ENCODE measurements at regions of chr1 and their contacts with region 1.

Region 1: GRCh38 chr1:201877877-201878401 is 10.8 kb upstream of the SHISA4 start:
- DNase-seq: no peak
- ATAC-seq: no peak
- H3K4me3 Mint-ChIP-seq: no peak overlapping the region
- H3K27ac Mint-ChIP-seq: no peak overlapping the region
- H3K4me1 Mint-ChIP-seq: peaks cover 11% of the 10 kb centered on the region
- H3K27me3 Mint-ChIP-seq: no peaks in the 10 kb centered on the region
- CTCF ChIP-seq: no peak

Region 2: GRCh38 chr1:201859424-201859823 is 18.5 kb before region 1 on chr1:
- CTCF ChIA-PET with region 1: no interaction called
- POLR2A ChIA-PET with region 1: no interaction called
- intact Hi-C with region 1: no loop called
- DNase-seq: no peak
- ATAC-seq: no peak
- H3K4me3 Mint-ChIP-seq: no peak overlapping the region
- H3K27ac Mint-ChIP-seq: no peak overlapping the region
- H3K4me1 Mint-ChIP-seq: no peaks in the 10 kb centered on the region
- H3K27me3 Mint-ChIP-seq: no peaks in the 10 kb centered on the region
- CTCF ChIP-seq: no peak

Region 3: DNA sequence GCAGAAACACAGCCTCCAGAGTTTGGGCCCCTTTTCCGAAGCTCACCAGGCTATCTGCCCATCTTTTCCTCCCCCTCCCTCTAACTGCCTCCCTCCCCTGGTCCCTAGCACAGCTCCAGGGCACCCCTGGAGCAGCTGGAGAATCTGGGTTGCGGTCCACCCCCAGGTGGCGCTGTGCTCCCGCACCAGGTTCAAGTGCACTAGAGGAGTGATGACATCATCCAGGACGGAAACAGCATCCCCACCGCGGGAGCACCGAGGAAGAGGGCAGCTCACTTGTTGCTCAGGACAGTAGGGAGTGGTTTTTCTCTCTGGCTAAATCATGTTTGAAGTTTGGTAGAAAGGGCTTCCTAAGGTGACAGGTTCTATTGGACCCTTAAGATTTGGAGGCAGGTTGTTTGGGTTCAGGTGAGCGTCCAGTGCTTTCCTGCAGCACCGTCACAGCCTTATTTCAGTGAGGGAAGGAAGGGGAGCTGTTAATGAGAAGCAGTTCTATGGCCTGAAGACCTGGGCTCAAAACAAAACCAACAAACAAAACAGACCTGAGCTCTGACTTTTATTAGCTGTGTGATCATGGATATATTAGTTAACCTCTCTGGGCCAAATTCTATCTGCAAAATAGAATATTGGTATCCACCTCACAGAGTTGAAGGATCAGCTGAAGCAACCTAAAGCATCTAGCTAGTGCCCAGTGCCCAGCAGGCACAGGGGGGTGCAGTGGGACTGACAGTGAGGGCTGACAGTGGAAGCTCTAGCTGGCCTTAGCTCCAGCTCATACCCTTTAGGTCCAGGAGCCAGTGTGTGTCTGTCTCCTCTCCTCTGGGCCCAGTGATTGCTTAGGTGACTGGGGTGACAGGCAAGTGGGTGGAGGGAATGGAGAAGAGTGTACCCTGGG is 18.2 kb after region 1 on chr1:
- CTCF ChIA-PET with region 1: interaction called, 20 read pairs
- POLR2A ChIA-PET with region 1: no interaction called
- intact Hi-C with region 1: no loop called
- DNase-seq: peak; percentile 52
- ATAC-seq: peak; percentile 77
- H3K4me3 Mint-ChIP-seq: peak overlapping the region; percentile 55
- H3K27ac Mint-ChIP-seq: no peak overlapping the region
- H3K4me1 Mint-ChIP-seq: peaks cover 5% of the 10 kb centered on the region
- H3K27me3 Mint-ChIP-seq: peaks cover 27% of the 10 kb centered on the region
- CTCF ChIP-seq: no peak

Region 4: GRCh38 chr1:201970334-201971159 is 92.6 kb after region 1 on chr1:
- CTCF ChIA-PET with region 1: interaction called, 14 read pairs
- POLR2A ChIA-PET with region 1: interaction called, 4 read pairs
- intact Hi-C with region 1: loop called (anchors 1 kb)
- DNase-seq: no peak
- ATAC-seq: no peak
- H3K4me3 Mint-ChIP-seq: no peak overlapping the region
- H3K27ac Mint-ChIP-seq: no peak overlapping the region
- H3K4me1 Mint-ChIP-seq: no peaks in the 10 kb centered on the region
- H3K27me3 Mint-ChIP-seq: no peaks in the 10 kb centered on the region
- CTCF ChIP-seq: no peak

Region 5: GRCh38 chr1:202009326-202010179 is 131.6 kb after region 1 on chr1:
- CTCF ChIA-PET with region 1: no interaction called
- POLR2A ChIA-PET with region 1: no interaction called
- intact Hi-C with region 1: no loop called
- DNase-seq: no peak
- ATAC-seq: peak; percentile 65
- H3K4me3 Mint-ChIP-seq: peak overlapping the region; percentile 28
- H3K27ac Mint-ChIP-seq: no peak overlapping the region
- H3K4me1 Mint-ChIP-seq: peaks cover 10% of the 10 kb centered on the region
- H3K27me3 Mint-ChIP-seq: no peaks in the 10 kb centered on the region
- CTCF ChIP-seq: peak; percentile 64

Region 6: GRCh38 chr1:202416641-202417040 is 538.7 kb after region 1 on chr1:
- CTCF ChIA-PET with region 1: no interaction called
- POLR2A ChIA-PET with region 1: interaction called, 11 read pairs
- intact Hi-C with region 1: no loop called
- DNase-seq: no peak
- ATAC-seq: no peak
- H3K4me3 Mint-ChIP-seq: no peak overlapping the region
- H3K27ac Mint-ChIP-seq: no peak overlapping the region
- H3K4me1 Mint-ChIP-seq: no peaks in the 10 kb centered on the region
- H3K27me3 Mint-ChIP-seq: no peaks in the 10 kb centered on the region
- CTCF ChIP-seq: no peak

Region 7: GRCh38 chr1:202605515-202605914 is 727.6 kb after region 1 on chr1:
- CTCF ChIA-PET with region 1: no interaction called
- POLR2A ChIA-PET with region 1: no interaction called
- intact Hi-C with region 1: no loop called
- DNase-seq: no peak
- ATAC-seq: no peak
- H3K4me3 Mint-ChIP-seq: no peak overlapping the region
- H3K27ac Mint-ChIP-seq: no peak overlapping the region
- H3K4me1 Mint-ChIP-seq: no peaks in the 10 kb centered on the region
- H3K27me3 Mint-ChIP-seq: no peaks in the 10 kb centered on the region
- CTCF ChIP-seq: no peak

Measured in activated B cell treated with CpG ODN at 0.5 μM for 24 hours (primary cell).